GM13976 (cell line): ENCODE measurements at regions of chr9 and their contacts with region 1.

Region 1: GRCh38 chr9:115035841-115036612 is 81.9 kb downstream of the TNC start:
- DNase-seq: peak; percentile 49
- CTCF ChIP-seq: no peak

Region 2: GRCh38 chr9:115204904-115205453 is 169.0 kb after region 1 on chr9:
- in situ Hi-C with region 1: loop called (anchors 10 kb)
- DNase-seq: peak; percentile 8
- CTCF ChIP-seq: no peak

Region 3: DNA sequence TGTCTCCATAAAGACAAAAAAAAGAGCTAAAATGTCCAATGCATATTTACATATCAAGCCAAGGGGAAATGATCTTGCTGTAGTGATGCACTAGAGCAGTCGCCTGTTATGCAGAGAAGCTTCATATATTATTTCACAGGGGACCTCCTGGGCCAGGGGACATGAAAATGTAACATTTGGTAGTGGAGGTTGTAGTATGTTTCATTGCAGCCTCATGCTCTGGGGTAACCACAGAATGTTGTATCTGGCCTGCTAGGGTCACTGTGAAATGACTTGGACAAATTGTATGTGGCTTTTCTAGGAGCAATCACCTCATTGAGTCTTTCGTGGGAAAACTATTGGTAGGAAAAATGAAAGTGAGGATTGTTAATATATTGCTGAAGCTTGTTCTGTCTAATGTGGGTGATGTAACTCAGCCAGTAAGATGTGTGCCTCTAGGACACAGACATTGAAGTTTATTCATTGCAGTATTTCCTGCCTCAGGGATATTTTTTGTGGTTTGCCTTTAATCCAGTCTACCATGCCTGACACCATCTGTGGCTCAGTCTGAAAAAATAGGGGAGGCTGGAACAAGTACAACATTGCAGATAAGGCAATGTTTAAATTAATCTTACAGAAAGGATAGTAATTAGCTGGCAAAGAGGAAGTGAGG is 512.7 kb after region 1 on chr9:
- in situ Hi-C with region 1: no loop called
- DNase-seq: no peak
- CTCF ChIP-seq: no peak